ENCODE measurements at regions of chr10 and their contacts with region 1.

Region 1: DNA sequence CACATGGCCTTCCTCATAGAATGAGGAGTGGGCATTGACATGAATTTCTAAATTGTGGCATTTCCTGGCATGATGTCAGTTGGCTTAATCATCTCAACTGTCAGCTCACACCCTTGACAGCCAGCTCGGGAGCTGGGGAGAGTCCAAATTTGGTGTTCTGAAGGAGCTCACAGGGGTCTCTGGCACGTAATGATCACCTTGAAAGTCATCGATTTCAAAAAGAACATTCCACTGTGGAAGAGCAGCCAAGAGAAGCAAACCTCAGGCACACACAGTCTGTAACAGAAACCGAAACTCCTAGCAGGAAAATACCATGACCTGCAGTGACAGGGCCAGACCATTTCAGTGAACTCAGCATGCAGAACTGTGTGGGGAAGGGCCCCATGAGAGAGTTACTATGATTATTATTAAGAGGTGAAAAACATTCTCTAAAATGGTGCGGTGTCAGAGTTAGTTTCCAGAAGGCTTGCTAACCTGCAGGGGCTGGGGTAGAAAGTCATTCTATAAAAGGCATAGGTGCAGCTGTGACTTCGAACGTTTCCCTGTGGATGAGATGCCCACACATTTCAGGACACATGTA is 26.4 kb upstream of the KLF6 start:
- DNase-seq: no peak
- ATAC-seq: peak; percentile 57 to 71

Region 2: GRCh38 chr10:3197348-3198003 is 613.9 kb before region 1 on chr10:
- intact Hi-C with region 1: no loop called
- DNase-seq: peak; percentile 79
- ATAC-seq: peak; percentile 94 to 96

Region 3: GRCh38 chr10:3424110-3424851 is 387.1 kb before region 1 on chr10:
- intact Hi-C with region 1: no loop called
- DNase-seq: peak; percentile 66
- ATAC-seq: peak; percentile 71 to 74

Region 4: DNA sequence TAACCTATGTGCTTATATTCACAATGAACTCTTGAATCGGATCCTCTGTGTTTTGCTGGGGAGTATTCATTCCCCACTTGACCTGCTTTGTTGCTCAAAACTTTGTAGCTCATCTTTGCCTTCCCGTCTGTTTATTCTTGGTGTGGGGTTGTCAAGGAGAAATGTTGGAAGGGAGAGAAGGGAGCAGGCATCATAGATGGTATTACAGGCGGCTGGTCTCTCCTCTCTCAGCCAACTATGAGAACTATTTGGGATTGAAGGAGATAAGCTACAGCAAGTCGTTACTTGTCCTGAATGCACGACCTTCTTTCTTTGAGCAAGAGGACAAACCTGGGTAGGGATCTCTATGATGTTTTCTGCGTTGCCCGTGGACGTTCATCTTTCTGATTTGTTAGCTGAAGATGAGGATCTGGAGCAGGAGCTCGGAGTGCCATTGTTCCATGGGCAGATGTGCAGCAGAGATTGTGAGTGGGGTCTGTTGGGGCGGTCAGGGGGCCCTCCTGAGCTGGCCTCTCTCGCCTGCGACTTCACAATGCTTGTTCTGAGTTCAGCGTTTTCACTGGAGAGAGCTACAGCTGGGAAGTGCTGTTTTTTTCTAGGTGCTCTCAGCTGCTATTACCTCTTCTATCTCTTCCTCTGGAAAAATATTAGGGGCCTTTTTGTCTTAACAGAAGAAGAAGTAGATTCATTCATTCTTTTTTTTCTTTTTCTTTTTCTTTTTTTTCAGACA is 100.5 kb after region 1 on chr10:
- intact Hi-C with region 1: loop called in 1 of 2 experiments (anchors 5 kb)
- DNase-seq: no peak
- ATAC-seq: peak; percentile 73 to 83